ENCODE measurements at regions of chr3 and their contacts with region 1.

Region 1: DNA sequence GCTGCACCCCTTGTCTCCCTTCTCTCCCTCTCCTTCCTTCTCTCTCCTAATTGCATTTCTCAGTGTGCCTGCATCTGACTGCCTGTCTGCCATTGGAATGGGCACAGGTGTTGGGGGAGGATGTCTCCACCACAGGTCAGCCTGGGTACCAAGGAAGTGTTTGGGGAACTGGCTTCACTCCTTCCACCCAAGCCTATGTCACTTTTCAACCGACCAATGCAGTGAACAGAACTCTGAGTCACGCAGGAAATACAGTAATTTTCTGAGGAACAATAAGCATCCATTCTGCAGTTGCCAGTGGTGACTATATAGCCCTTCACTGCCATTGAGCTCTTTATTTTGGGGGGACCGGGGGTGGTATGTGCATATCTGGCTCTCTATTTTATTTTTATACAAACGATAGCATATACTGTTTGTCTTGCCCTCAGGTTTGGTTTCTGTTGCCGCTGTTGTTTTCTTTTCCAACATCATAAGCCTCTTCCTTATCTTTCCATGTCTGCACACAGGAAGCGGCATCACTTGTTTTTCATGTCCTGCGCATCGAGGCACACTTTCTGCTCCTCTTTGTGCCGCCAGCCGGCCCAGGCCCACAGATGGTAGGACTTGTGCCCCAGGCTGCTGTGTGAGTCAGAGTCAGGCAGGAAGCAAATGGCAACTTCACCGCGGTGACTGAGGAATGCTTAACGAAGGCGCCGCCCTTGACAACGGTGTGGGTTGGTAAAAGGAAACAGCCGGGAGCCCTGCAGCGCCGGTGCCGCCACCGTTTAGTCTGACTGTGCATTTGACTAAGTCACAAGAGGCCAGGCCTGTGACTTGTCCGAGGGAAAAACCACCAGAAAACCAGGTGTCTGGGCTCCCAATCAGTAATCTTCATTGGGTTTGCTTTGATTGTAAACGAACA is 21.1 kb upstream of the CDCP1 start:
- DNase-seq: peak; percentile 95
- H3K4me3 Mint-ChIP-seq: peak overlapping the region; percentile 55
- H3K27ac Mint-ChIP-seq: peak overlapping the region; percentile 88
- H3K4me1 Mint-ChIP-seq: peaks cover 19% of the 10 kb centered on the region
- H3K27me3 Mint-ChIP-seq: no peaks in the 10 kb centered on the region

Region 2: DNA sequence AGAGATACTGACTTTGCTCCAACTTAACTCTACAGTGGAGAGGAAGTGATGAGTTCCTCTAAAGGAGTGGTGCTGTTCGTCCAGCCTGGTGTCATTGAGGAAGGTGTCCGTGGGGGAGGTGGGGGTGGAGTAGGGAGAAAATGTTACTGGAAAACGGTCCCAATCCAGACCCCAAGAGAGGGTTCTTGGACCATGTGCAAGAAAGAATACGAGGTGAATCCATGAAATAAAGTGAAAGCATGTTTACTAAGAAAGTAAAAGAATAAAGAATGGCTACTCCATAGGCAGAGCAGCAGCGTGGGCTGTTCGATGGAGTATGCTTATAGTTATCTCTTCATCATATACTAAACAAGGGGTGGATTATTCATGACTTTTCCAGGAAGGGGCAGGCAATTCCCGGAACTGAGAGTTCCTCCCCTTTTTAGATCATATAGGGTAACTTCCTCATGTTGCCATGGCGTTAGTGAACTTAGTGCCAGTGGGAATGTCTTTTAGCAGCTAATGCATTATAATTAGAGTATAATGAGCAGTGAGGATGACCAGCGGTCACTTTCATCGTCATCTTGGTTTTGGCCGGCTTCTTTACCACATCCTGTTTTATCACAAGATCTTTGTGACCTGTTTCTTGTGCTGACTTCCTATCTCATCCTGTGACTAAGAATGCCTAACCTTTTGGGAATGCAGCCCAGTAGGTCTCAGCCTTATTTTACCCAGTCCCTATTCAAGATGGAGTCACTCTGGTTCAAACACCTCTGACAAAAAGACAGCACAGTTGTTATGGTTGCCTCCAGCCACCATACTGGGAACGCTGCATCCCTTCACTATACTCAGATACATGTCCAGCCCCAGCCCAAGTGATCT is 102.5 kb before region 1 on chr3:
- CTCF ChIA-PET with region 1: no interaction called
- intact Hi-C with region 1: loop called (anchors 2 kb)
- DNase-seq: peak; percentile 69
- H3K4me3 Mint-ChIP-seq: peak overlapping the region; percentile 14
- H3K27ac Mint-ChIP-seq: peak overlapping the region; percentile 48
- H3K4me1 Mint-ChIP-seq: peaks cover 22% of the 10 kb centered on the region
- H3K27me3 Mint-ChIP-seq: no peaks in the 10 kb centered on the region

Region 3: GRCh38 chr3:45109771-45110508 is 57.3 kb before region 1 on chr3:
- CTCF ChIA-PET with region 1: no interaction called
- intact Hi-C with region 1: loop called (anchors 1 kb)
- DNase-seq: peak; percentile 56
- H3K4me3 Mint-ChIP-seq: peak overlapping the region; percentile 47
- H3K27ac Mint-ChIP-seq: no peak overlapping the region
- H3K4me1 Mint-ChIP-seq: peaks cover 70% of the 10 kb centered on the region
- H3K27me3 Mint-ChIP-seq: no peaks in the 10 kb centered on the region

Region 4: DNA sequence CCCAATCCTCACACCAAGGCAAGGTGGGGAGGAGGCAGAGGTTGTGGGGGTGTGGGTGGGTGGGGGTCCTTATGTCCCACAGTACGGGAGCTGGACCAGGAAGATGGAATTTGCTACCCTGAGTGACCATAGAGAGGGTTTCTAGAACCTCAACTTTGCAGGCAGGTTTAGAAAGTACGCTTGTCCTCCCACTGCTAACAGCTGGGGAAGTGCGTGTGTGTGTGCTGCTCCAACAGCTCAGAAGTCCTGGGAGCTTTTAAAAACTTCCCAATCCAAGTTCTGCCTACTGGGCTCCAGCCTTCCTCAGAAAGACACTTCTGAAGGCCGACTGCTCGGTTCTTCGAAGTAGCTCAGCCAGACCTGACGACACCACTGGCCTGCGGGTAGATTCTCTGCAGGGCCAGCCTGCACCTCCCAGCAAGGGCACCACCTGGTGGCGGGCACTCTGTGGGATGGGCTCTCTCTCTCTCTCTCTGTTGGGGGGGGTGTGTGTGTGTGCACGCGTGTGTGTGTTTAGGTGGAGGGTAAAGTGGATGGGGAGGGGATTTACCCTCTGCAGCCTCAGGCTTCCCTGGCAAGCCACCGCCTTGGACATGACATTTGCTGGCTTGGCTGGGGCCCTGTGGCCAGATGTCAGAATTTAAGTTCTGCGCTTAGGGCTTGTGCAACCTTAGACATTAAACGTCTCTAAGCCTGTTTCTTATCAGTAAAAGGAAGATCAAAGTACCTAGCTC is 43.2 kb after region 1 on chr3:
- CTCF ChIA-PET with region 1: interaction called, 4 read pairs
- intact Hi-C with region 1: loop called (anchors 1 kb)
- DNase-seq: peak; percentile 86
- H3K4me3 Mint-ChIP-seq: no peak overlapping the region
- H3K27ac Mint-ChIP-seq: no peak overlapping the region
- H3K4me1 Mint-ChIP-seq: peaks cover 11% of the 10 kb centered on the region
- H3K27me3 Mint-ChIP-seq: peaks cover 3% of the 10 kb centered on the region